ENCODE measurements at regions of chr1 and their contacts with region 1.

Region 1: DNA sequence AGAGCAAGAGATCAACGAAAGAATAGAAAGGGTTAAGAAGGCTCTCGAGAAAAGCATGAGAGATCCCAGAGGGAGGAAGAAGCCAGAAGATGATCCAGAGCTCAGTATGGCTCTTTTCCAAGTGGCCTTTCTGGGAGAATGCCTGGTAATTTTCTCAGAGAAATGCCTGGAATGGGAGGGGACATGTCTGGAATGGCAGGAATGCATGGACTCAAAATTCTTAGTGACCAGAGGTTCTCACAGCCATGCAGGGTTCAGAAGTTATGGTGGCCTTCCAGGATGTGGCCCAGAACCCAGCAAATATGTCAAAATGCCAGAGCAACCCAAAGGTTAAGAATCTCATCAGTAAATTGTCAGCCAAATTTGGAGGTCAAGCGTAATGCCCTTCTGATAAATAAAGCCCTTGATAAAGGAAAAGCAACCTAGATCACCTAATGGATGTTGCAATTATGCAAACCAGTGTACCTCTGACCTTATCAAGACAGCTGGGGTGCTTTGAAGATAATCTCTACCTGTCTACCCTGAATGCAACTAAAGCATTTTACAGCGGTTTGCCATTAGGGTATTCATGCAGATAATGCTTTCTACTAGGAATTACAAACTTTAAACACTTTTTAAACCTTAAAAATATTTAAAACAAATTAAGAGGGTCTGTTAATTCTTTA is 53.1 kb downstream of the NBPF6 start:
- DNase-seq: no peak

Region 2: DNA sequence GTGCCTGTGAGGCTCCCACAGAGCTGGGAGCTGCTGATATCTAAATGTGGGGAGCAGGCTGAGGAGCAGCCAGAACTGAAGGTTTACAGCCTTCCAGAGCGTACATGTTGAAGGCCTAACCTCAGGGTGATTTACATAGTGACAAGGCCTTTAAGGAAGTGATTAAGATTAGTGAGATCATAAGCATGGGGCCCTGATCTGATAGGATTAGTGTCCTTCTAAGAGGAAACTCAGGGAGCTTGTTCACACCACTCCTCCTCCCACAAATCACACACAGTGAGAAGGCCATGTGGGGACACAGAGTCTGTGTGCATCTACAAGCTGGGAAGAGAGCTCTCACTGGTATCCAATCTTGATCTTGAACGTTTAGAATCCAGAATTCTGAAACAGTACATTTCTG is 145.4 kb before region 1 on chr1:
- intact Hi-C with region 1: loop called in 1 of 2 experiments (anchors 5 kb)
- DNase-seq: no peak

Region 3: DNA sequence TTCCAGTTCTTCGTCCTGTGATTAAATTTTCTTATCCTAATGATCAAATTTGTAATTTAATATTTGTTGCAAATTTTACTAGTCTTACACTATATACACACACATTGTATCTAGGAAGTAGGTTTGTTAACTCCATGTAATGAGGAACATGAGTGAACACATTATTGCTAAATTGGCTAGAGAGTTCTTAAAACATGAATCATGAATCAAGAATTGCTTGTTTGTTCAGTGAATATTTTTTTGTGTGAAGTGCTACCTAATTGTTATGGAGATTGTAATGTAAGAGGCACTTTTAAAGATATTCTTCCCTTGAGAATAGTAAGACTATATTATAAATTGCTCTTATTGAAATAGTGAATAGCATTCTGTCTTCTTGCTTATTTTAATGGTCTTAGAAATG is 378.2 kb after region 1 on chr1:
- intact Hi-C with region 1: no loop called
- DNase-seq: no peak

Measured in posterior vena cava (tissue), 2 donors.